HAP-1 (cell line): ENCODE measurements at regions of chr17 and their contacts with region 1.

Region 1: DNA sequence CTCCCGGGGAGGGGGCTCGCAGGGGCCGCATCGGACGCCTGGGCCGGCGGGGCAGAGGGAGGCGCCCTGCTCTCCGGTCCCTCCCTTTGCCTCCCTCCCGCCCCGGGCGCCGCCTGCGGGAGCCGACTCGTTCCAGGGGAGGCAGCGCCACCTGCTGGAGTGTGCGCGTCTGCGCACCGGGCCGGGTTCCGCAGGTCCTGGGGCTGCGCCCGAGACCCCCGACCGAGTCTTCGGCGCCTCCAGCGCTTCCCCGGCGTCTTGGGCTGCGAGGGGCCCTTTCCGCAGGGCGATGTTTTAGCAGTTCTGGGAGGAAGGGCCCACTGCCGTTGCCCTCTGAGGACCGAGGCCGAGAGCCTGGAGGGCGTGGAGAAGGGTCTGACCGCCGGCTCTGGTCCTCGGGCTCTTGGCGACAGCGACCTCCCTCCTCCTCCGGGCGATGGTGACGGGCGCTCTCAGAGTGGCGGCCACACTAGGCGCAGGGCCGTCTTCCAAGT is 106.3 kb downstream of the SEC14L1 start:
- DNase-seq: peak; percentile 71 to 94
- H3K4me3 ChIP-seq: peak overlapping the region; percentile 30
- H3K4me1 ChIP-seq: peaks cover 9% of the 10 kb centered on the region
- H3K27me3 ChIP-seq: peaks cover 14% of the 10 kb centered on the region

Region 2: DNA sequence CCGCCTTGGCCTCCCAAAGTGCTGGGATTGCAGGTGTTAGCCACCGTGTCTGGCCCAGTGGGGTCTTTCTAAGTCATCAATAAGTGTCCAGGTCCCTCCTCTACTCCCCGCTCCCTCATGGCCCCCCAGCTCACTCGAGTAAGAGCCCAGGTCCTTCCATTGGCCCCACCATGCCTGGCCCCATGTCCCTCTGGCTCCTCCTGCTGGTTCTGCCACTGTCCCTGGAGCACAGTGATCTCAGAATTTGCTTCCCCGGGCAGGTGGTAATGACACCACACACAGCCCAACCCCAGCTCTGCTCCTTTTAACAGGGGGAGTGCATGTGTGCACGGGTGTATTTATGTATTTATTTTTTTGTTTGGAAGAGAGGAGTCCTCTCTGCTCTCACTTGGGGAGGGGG is 359.3 kb before region 1 on chr17:
- in situ Hi-C with region 1: no loop called
- DNase-seq: no peak
- H3K4me3 ChIP-seq: no peak overlapping the region
- H3K4me1 ChIP-seq: no peaks in the 10 kb centered on the region
- H3K27me3 ChIP-seq: no peaks in the 10 kb centered on the region

Region 3: GRCh38 chr17:77088455-77089123 is 158.5 kb before region 1 on chr17:
- in situ Hi-C with region 1: loop called (anchors 5 kb)
- DNase-seq: peak; percentile 94 to 96
- H3K4me3 ChIP-seq: peak overlapping the region; percentile 79
- H3K4me1 ChIP-seq: peaks cover 8% of the 10 kb centered on the region
- H3K27me3 ChIP-seq: no peaks in the 10 kb centered on the region